ENCODE measurements at regions of chr10 and their contacts with region 1.

Region 1: GRCh38 chr10:131885391-131886161 is 15.2 kb upstream of the PPP2R2D start:
- DNase-seq: no peak
- H3K4me3 ChIP-seq: no peak overlapping the region
- H3K27ac ChIP-seq: no peak overlapping the region
- H3K4me1 ChIP-seq: peaks cover 5 to 8% (median 6%) of the 10 kb centered on the region in 4 donors
- H3K27me3 ChIP-seq: peaks cover 0 to 42% (median 0%) of the 10 kb centered on the region in 4 donors
- CTCF ChIP-seq: peak; percentile 88 to 98 (median 93)
- EP300 ChIP-seq: no peak
- POLR2A ChIP-seq: no peak

Region 2: GRCh38 chr10:131949041-131949862 is 63.7 kb after region 1 on chr10:
- intact Hi-C with region 1: no loop called
- DNase-seq: no peak
- H3K4me3 ChIP-seq: no peak overlapping the region
- H3K27ac ChIP-seq: no peak overlapping the region
- H3K4me1 ChIP-seq: peaks cover 0 to 14% (median 11%) of the 10 kb centered on the region in 4 donors
- H3K27me3 ChIP-seq: no peaks in the 10 kb centered on the region
- CTCF ChIP-seq: no peak
- EP300 ChIP-seq: no peak
- POLR2A ChIP-seq: no peak

Region 3: GRCh38 chr10:132023092-132023811 is 137.7 kb after region 1 on chr10:
- intact Hi-C with region 1: loop called (anchors 1 kb)
- DNase-seq: no peak
- H3K4me3 ChIP-seq: peak overlapping the region; percentile 14 to 50 (median 40)
- H3K27ac ChIP-seq: no peak overlapping the region
- H3K4me1 ChIP-seq: peaks cover 6 to 12% (median 10%) of the 10 kb centered on the region in 4 donors
- H3K27me3 ChIP-seq: peaks cover 0 to 56% (median 2%) of the 10 kb centered on the region in 4 donors
- CTCF ChIP-seq: peak; percentile 82 to 93 (median 86)
- EP300 ChIP-seq: no peak
- POLR2A ChIP-seq: no peak

Region 4: GRCh38 chr10:132142411-132143161 is 257.0 kb after region 1 on chr10:
- intact Hi-C with region 1: loop called (anchors 5 kb)
- DNase-seq: no peak
- H3K4me3 ChIP-seq: no peak overlapping the region
- H3K27ac ChIP-seq: no peak overlapping the region
- H3K4me1 ChIP-seq: peaks cover 4 to 14% (median 9%) of the 10 kb centered on the region in 4 donors
- H3K27me3 ChIP-seq: peaks cover 0 to 19% (median 0%) of the 10 kb centered on the region in 4 donors
- CTCF ChIP-seq: peak in 2 of 3 experiments; percentile 73 to 80
- EP300 ChIP-seq: no peak
- POLR2A ChIP-seq: no peak

Region 5: GRCh38 chr10:132175907-132176581 is 290.5 kb after region 1 on chr10:
- intact Hi-C with region 1: no loop called
- DNase-seq: no peak
- H3K4me3 ChIP-seq: no peak overlapping the region
- H3K27ac ChIP-seq: no peak overlapping the region
- H3K4me1 ChIP-seq: peaks cover 8 to 21% (median 10%) of the 10 kb centered on the region in 4 donors
- H3K27me3 ChIP-seq: peaks cover 0 to 32% (median 0%) of the 10 kb centered on the region in 4 donors
- CTCF ChIP-seq: no peak
- EP300 ChIP-seq: no peak
- POLR2A ChIP-seq: no peak

Region 6: GRCh38 chr10:132397671-132398565 is 512.3 kb after region 1 on chr10:
- intact Hi-C with region 1: no loop called
- DNase-seq: no peak
- H3K4me3 ChIP-seq: peak overlapping the region; percentile 74 to 96 (median 92)
- H3K27ac ChIP-seq: peak overlapping the region; percentile 87 to 99 (median 94)
- H3K4me1 ChIP-seq: peaks cover 42 to 72% (median 66%) of the 10 kb centered on the region in 4 donors
- H3K27me3 ChIP-seq: no peaks in the 10 kb centered on the region
- CTCF ChIP-seq: no peak
- EP300 ChIP-seq: no peak
- POLR2A ChIP-seq: no peak

Region 7: GRCh38 chr10:132684164-132684891 is 798.8 kb after region 1 on chr10:
- intact Hi-C with region 1: no loop called
- DNase-seq: no peak
- H3K4me3 ChIP-seq: no peak overlapping the region
- H3K27ac ChIP-seq: peak overlapping the region in 2 of 4 donors; percentile 41 to 62
- H3K4me1 ChIP-seq: peaks cover 3 to 35% (median 30%) of the 10 kb centered on the region in 4 donors
- H3K27me3 ChIP-seq: no peaks in the 10 kb centered on the region
- CTCF ChIP-seq: no peak
- EP300 ChIP-seq: no peak
- POLR2A ChIP-seq: no peak

Measured in esophagus muscularis mucosa (tissue), 4 donors.